ENCODE measurements at regions of chr19 and their contacts with region 1.

Region 1: GRCh38 chr19:39532233-39533002 is at the start of gene EID2B:
- DNase-seq: peak; percentile 95
- H3K4me3 ChIP-seq: peak within 1 kb of the TSS; percentile 48 to 75 (median 62)
- H3K27ac ChIP-seq: peak within 1 kb of the TSS; percentile 76 to 91 (median 84)
- H3K4me1 ChIP-seq: peaks cover 0 to 24% (median 4%) of the 10 kb centered on the region in 4 donors
- H3K27me3 ChIP-seq: no peaks in the 10 kb centered on the region
- CTCF ChIP-seq: peak; percentile 94 to 99 (median 98)
- EP300 ChIP-seq: no peak
- POLR2A ChIP-seq: peak; percentile 55
- total RNA-seq, gene EID2B: 1.00 to 1.5 (median 1.3) TPM

Region 2: DNA sequence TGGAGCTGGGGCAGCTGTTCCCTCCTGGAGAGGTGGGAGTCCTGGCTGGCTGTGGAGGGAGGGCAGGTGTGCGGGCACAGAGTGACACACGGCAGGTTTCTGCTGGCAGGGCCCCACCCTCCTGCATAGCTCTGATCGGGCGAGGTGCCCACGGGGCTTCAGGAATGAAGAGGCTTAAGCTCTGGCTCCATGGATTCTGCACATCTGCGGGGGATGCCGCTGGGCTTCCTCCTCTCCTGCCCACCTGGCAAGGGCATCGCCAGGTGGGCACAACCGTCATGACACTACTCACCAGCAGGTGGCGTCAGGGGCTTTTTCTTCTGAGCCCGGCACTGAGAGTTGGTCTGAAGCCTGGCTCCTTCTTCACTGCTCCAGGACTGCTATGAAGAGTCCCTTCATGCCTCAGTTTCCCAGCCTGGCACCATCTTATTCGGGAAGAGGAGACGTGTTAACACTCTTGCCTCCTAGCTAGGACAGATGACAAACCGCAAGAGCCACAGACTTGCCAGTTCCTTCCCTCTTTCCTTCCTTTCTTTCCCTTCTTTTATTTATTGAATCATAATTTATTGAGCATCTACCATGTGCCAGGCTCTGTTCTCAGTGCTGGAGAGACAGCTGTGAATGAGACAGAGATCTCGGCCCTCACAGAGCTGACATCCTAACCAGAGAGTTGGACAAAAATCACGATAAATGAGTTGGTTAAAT is 422.0 kb before region 1 on chr19:
- in situ Hi-C with region 1: loop called in 2 of 4 experiments (anchors 25 kb)
- intact Hi-C with region 1: no loop called
- DNase-seq: peak; percentile 73
- H3K4me3 ChIP-seq: no peak overlapping the region
- H3K27ac ChIP-seq: no peak overlapping the region
- H3K4me1 ChIP-seq: no peaks in the 10 kb centered on the region
- H3K27me3 ChIP-seq: peaks cover 37% of the 10 kb centered on the region
- CTCF ChIP-seq: peak; percentile 73 to 78 (median 76)
- EP300 ChIP-seq: no peak
- POLR2A ChIP-seq: no peak

Region 3: DNA sequence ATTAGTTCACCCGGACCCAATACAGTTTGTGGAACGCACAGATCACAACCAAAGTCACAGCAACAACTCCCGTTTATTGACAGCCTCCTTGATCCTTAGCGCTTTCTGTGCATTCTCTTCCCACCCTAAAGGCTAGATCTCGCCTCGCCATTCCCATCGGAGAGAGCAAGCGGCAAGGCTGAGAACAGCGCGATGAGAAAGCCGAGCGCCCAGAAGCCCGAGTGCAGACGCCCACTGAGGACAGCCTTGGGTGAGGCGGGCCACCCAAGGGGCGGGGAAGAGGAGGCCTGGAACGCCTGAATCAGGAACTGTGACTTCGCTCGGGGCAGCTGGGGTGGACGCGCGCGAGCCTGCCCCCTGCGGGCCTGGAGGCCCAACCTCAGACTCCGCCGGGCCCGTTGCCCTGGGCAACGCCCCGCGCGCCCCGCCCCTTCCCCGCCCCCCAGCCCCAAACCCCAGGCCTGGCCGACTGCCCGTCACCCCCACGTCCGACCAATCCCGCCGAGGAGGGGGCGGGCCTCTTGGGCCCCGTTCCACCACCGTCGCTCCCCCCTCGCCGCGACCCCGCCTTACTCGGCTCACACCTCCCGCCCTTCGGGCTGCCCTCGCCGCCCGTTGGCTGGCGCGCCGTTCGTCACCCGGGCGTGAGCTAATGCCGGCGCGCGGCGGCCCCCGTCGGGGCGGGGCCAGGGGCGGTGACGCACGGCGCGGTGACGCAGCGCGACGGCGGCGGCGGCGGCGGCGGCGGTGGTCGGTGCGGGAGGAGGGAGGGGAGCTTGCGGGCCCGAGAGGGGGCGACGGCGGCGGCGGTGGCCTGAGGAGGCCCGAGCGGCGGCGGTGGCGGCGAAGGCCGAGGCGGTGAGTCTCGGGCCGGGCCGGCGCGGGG is 190.5 kb before region 1 on chr19 and contains the start of gene SAMD4B:
- in situ Hi-C with region 1: loop called in 2 of 4 experiments (anchors 25 kb)
- intact Hi-C with region 1: loop called (anchors 10 kb)
- DNase-seq: peak; percentile 99
- H3K4me3 ChIP-seq: peak within 1 kb of the TSS; percentile 81 to 100 (median 92)
- H3K27ac ChIP-seq: peak within 1 kb of the TSS; percentile 83 to 93 (median 93)
- H3K4me1 ChIP-seq: peaks cover 19 to 44% (median 26%) of the 10 kb centered on the region in 4 donors
- H3K27me3 ChIP-seq: no peaks in the 10 kb centered on the region
- CTCF ChIP-seq: peak; percentile 66 to 84 (median 78)
- EP300 ChIP-seq: peak; percentile 6
- POLR2A ChIP-seq: peak; percentile 97
- total RNA-seq, gene SAMD4B: 60.7 to 102 (median 77.1) TPM

Region 4: GRCh38 chr19:39445265-39446111 is 86.9 kb before region 1 on chr19 and contains the start of gene SUPT5H:
- in situ Hi-C with region 1: loop called in 3 of 4 experiments (anchors 5 to 25 kb)
- intact Hi-C with region 1: no loop called
- DNase-seq: peak; percentile 98
- H3K4me3 ChIP-seq: peak within 1 kb of the TSS; percentile 61 to 95 (median 94)
- H3K27ac ChIP-seq: peak within 1 kb of the TSS; percentile 88 to 98 (median 96)
- H3K4me1 ChIP-seq: peaks cover 13 to 42% (median 27%) of the 10 kb centered on the region in 4 donors
- H3K27me3 ChIP-seq: no peaks in the 10 kb centered on the region
- CTCF ChIP-seq: no peak
- EP300 ChIP-seq: no peak
- POLR2A ChIP-seq: peak; percentile 96
- total RNA-seq, gene SUPT5H: 97.1 to 161 (median 125) TPM

Region 5: DNA sequence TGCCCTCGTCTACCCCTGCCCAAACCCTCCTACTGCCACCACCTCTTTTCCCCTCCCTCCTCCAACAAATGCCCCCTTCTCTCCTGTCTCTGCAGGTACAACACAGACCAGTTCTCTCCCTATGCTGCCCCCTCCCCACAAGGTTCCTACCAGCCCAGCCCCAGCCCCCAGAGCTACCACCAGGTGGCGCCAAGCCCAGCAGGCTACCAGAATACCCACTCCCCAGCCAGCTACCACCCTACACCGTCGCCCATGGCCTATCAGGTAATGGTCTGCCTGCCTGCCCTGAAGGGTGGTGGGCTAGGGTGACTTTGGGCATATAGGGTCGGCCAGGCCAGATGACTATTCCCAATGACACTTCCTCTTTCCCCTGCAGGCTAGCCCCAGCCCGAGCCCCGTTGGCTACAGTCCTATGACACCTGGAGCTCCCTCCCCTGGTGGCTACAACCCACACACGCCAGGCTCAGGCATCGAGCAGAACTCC is 58.2 kb before region 1 on chr19:
- in situ Hi-C with region 1: no loop called
- intact Hi-C with region 1: loop called (anchors 10 kb)
- DNase-seq: peak; percentile 50
- H3K4me3 ChIP-seq: no peak overlapping the region
- H3K27ac ChIP-seq: no peak overlapping the region
- H3K4me1 ChIP-seq: no peaks in the 10 kb centered on the region
- H3K27me3 ChIP-seq: no peaks in the 10 kb centered on the region
- CTCF ChIP-seq: peak; percentile 70 to 83 (median 78)
- EP300 ChIP-seq: no peak
- POLR2A ChIP-seq: no peak